PC-9 (cell line): ENCODE measurements at regions of chrX and their contacts with region 1.

Region 1: GRCh38 chrX:153724252-153725040 is at the starts of genes ABCD1 and BCAP31:
- DNase-seq: peak; percentile 76 to 97
- H3K4me3 ChIP-seq: peak within 1 kb of the TSS; percentile 85
- H3K27ac ChIP-seq: peak within 1 kb of the TSS; percentile 91
- H3K4me1 ChIP-seq: peaks cover 34% of the 10 kb centered on the region
- H3K27me3 ChIP-seq: no peaks in the 10 kb centered on the region
- CTCF ChIP-seq: no peak
- total RNA-seq, gene ABCD1: 40.0 and 44.9 TPM in 2 replicates
- total RNA-seq, gene BCAP31: 522 and 541 TPM in 2 replicates

Region 2: DNA sequence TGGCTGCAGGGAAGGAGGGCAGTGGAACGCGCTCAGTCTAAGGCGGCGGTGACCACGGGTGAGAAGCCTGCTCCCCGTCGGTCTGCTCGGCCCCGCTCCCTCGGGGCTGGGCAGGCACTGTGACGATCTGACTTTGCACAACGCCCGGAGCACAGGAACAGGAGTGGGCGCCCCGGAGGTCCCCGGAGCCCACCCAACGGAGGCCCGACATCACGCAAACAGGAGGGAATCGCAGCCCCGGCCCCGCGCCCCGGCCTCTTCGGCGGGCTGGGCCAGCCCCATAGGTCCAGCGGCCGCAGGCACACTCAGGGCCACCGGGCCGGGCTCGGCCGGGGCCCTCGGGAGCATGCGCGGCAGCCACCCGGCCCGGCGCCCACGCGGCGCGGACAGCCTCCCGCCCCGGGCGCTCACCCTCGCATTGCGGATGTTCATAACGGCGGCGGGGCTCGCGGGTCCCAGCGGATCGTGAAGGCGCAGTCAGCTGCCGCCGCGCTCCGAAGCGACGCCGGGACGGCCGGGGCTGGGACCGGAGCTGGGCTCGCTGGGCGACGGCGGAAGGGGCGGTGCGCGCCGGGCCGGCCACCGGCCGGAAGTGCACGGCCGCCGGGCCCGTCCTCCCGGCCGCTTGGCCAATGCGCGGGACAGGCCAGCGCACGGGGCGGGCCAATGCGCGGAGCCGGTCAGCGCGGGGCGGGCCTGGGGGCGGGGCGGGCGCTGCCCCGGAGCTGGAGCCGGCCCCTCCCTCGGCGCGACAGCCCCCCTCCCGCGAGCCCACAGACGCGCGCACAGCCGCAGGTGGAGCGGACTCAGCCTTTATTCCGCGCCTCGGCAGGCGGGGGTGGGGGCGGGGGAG is 210.3 kb after region 1 on chrX and contains the start of gene NAA10:
- CTCF ChIA-PET with region 1: no interaction called
- POLR2A ChIA-PET with region 1: no interaction called
- intact Hi-C with region 1: loop called (anchors 2 kb)
- DNase-seq: peak in 1 of 2 experiments; percentile 87
- H3K4me3 ChIP-seq: peak within 1 kb of the TSS; percentile 85
- H3K27ac ChIP-seq: no peak within 1 kb of the TSS
- H3K4me1 ChIP-seq: 0 out of 2 replicates have a peak, but pooled peaks cover under 1% of the 10 kb centered on the region
- H3K27me3 ChIP-seq: no peaks in the 10 kb centered on the region
- CTCF ChIP-seq: no peak
- total RNA-seq, gene NAA10: 181 and 189 TPM in 2 replicates